ENCODE measurements at regions of chr1 and their contacts with region 1.

Region 1: GRCh38 chr1:109532365-109533136 is 7.1 kb upstream of the GPR61 start:
- DNase-seq: peak; percentile 89 to 94 (median 91)
- H3K4me3 ChIP-seq: peak overlapping the region in 1 of 3 donors; percentile 35
- H3K27ac ChIP-seq: no peak overlapping the region
- H3K4me1 ChIP-seq: peaks cover 0 to 4% (median 0%) of the 10 kb centered on the region in 3 donors
- H3K27me3 ChIP-seq: no peaks in the 10 kb centered on the region
- CTCF ChIP-seq: peak; percentile 99

Region 2: GRCh38 chr1:109426278-109427170 is 106.0 kb before region 1 on chr1 and contains the start of gene PSMA5:
- intact Hi-C with region 1: loop called (anchors 10 kb)
- DNase-seq: peak; percentile 97 to 99 (median 99)
- H3K4me3 ChIP-seq: peak within 1 kb of the TSS; percentile 63 to 94 (median 92)
- H3K27ac ChIP-seq: peak within 1 kb of the TSS; percentile 85 to 92
- H3K4me1 ChIP-seq: peaks cover 4 to 8% (median 6%) of the 10 kb centered on the region in 3 donors
- H3K27me3 ChIP-seq: no peaks in the 10 kb centered on the region
- CTCF ChIP-seq: peak; percentile 16
- total RNA-seq, gene PSMA5: 71.4 TPM

Region 3: DNA sequence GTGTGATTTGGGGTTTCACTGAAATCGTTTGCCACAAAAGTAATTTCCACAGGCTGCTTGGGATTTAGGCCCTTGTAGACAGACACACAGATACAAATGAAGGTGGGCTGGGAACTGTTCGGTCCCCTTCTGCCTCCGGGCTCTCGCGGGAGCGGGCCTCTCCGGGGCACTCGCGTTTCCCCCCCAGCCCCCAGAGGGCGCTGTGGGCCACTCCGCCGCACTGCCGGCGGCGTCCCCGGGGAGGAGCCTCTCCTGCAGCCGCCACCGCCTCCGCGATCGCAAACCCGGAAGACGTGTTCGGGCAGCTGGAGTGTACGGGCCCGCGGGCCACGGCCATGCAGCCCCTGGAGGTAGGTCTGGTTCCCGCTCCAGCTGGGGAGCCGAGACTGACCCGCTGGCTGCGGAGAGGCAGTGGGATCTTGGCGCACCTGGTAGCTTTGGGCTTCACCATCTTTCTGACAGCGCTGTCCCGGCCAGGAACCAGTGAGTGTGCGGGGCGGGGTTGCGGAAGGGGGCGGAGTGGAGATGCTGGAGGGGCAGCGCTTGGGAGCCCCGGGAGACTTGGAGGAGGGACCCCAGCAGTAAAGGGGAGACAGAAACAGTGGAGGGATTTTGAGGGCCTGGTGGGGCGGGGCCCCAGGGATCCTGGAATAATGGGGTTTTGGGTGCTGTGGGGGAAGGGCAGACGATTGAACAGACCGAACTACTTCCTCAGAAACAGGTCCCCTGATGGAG is 38.6 kb before region 1 on chr1 and contains the start of gene CYB561D1:
- intact Hi-C with region 1: loop called (anchors 5 kb)
- DNase-seq: peak; percentile 90 to 95 (median 93)
- H3K4me3 ChIP-seq: peak within 1 kb of the TSS; percentile 80 to 94 (median 93)
- H3K27ac ChIP-seq: peak within 1 kb of the TSS; percentile 57 to 59
- H3K4me1 ChIP-seq: peaks cover 0 to 11% (median 4%) of the 10 kb centered on the region in 3 donors
- H3K27me3 ChIP-seq: no peaks in the 10 kb centered on the region
- CTCF ChIP-seq: peak; percentile 80
- total RNA-seq, gene CYB561D1: 18.0 TPM

Region 4: DNA sequence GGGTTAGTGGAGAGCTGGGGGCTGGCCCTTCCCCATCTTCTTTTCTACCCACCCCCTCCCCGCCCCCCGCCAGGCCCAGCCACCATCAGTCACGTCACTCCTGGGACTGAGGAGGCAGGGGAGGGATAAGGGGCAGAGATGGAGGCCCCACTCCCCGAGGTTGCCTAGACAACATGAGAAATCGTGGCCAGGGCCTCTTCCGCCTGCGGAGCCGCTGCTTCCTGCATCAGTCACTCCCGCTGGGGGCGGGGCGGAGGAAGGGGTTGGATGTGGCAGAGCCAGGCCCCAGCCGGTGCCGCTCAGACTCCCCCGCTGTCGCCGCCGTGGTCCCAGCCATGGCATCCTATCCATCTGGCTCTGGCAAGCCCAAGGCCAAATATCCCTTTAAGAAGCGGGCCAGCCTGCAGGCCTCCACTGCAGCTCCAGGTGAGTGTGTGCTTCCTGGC is 88.3 kb after region 1 on chr1:
- intact Hi-C with region 1: loop called (anchors 10 kb)
- DNase-seq: peak; percentile 94 to 98 (median 95)
- H3K4me3 ChIP-seq: peak overlapping the region; percentile 66 to 95 (median 88)
- H3K27ac ChIP-seq: peak overlapping the region; percentile 80 to 87
- H3K4me1 ChIP-seq: peaks cover 3 to 34% (median 6%) of the 10 kb centered on the region in 3 donors
- H3K27me3 ChIP-seq: no peaks in the 10 kb centered on the region
- CTCF ChIP-seq: peak; percentile 7

Measured in kidney (tissue), 22 donors.